ENCODE measurements at regions of chr2 and their contacts with region 1.

Region 1: DNA sequence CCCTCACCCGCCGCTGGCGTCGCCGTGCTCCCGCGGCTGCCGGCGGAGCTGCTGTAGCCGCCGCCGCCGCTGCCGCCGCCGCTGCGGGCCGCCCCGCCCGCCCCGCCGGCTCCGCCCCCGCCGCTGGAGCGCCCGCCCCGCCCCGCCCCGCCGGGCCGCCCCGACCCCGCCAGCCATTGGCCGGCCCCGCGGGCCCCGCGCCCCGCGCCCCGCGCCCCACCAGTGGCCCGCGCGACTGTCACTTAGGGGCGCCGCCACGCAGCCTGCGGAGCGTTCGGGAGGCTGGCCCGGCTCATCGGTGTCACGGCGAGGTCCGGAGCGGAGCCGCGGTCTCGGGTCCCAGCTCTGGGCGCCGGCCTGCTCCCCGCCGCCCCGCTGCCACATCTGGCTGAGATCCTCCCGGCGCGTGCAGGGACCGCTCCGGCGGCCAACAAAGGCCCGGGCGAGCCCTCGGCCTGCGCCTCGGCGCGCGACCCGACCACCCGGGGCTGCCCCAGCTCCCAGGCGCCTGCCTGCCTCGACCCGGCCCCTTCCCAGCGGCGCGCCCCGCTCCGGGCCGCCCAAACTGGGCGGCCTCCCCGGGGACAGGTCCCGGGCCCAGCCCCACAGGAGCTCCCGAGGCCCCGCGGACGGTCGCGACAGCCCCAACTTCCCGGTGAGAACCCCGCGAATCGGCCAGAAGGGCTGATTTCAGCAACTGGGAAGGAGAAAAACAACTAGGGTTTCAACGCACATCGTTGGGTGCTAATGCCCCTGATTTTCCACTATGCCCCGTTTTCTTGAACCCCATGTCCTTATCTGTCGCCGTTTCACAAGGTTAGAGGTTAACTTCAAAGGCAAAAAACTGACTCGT is at the start of gene MGAT4A:
- DNase-seq: peak; percentile 85
- ATAC-seq: peak; percentile 86
- H3K4me3 ChIP-seq: peak within 1 kb of the TSS; percentile 48 to 94 (median 63)
- H3K4me3 Mint-ChIP-seq: peak within 1 kb of the TSS; percentile 93
- H3K27ac ChIP-seq: peak within 1 kb of the TSS; percentile 44 to 75
- H3K27ac Mint-ChIP-seq: peak within 1 kb of the TSS; percentile 91
- H3K4me1 ChIP-seq: peaks cover 27 to 42% of the 10 kb centered on the region in 2 donors
- H3K4me1 Mint-ChIP-seq: peaks cover 53% of the 10 kb centered on the region
- H3K27me3 ChIP-seq: no peaks in the 10 kb centered on the region
- H3K27me3 Mint-ChIP-seq: no peaks in the 10 kb centered on the region
- CTCF ChIP-seq: no peak
- total RNA-seq, gene MGAT4A: 28.9 and 32.7 TPM in 2 replicates

Region 2: DNA sequence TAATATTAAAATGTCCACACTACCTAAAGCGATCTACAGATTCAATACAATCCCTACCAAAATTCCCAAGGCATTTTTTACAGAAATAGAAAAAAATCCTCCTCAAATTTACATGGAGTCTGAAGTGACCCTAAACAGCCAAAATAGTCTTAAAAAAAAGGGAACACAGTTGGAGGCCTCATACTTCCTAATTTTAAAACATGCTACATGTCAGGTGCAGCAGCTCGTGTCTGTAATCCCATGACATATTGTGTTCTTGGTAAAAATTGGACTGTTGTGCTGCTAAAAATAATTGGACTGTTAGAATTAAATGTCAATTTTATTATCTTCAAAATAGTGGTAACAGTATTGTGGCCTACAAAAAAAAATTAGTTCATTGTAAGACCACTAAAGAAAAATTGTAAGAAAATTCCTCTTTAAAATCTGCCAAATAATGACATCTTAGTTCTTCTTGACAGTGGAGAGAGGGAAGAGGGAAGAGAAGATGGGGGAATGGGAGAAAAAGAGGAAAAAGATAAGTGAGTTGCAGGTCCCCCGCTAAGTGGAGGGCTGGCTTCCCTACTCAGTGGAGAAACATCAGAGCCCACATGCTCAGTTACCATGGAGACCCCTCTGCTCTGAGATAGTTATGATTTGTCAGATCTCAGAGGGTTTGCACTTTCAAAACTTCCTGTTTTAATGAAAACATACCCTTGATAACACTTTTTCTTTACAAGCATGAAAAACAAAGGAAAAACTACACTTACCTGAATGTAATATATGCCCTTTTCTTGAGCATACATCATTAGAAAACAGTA is 76.4 kb before region 1 on chr2:
- CTCF ChIA-PET with region 1: interaction called, 12 read pairs
- POLR2A ChIA-PET with region 1: no interaction called
- intact Hi-C with region 1: loop called (anchors 2 kb)
- DNase-seq: peak; percentile 38
- ATAC-seq: peak; percentile 68
- H3K4me3 ChIP-seq: no peak overlapping the region
- H3K4me3 Mint-ChIP-seq: peak overlapping the region; percentile 6
- H3K27ac ChIP-seq: peak overlapping the region in 1 of 2 donors; percentile 37
- H3K27ac Mint-ChIP-seq: peak overlapping the region; percentile 71
- H3K4me1 ChIP-seq: peaks cover 5 to 8% of the 10 kb centered on the region in 2 donors
- H3K4me1 Mint-ChIP-seq: peaks cover 29% of the 10 kb centered on the region
- H3K27me3 ChIP-seq: no peaks in the 10 kb centered on the region
- H3K27me3 Mint-ChIP-seq: no peaks in the 10 kb centered on the region
- CTCF ChIP-seq: no peak

Region 3: DNA sequence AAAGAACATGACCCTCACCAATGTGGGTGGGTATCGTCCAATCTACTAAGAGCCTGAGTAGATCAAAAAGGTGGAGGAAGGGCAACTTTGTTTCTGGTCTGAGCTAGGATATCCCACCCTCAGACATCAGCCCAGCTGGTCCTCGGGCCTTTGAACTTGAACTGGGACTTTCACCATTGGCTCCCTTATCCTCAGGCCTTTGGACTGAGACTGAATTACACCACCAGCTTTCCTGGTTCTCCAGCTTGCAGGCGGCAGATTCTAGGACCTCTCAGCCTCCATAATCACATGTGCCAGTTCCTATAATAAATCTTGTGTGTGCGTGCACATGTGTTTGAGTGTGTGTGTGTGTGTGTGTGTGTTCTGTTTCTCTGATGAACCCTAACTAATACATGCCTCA is 11.0 kb before region 1 on chr2:
- CTCF ChIA-PET with region 1: interaction called, 15 read pairs
- POLR2A ChIA-PET with region 1: interaction called, 4 read pairs
- intact Hi-C with region 1: no loop called
- DNase-seq: no peak
- ATAC-seq: no peak
- H3K4me3 ChIP-seq: no peak overlapping the region
- H3K4me3 Mint-ChIP-seq: no peak overlapping the region
- H3K27ac ChIP-seq: no peak overlapping the region
- H3K27ac Mint-ChIP-seq: no peak overlapping the region
- H3K4me1 ChIP-seq: no peaks in the 10 kb centered on the region
- H3K4me1 Mint-ChIP-seq: peaks cover 28% of the 10 kb centered on the region
- H3K27me3 ChIP-seq: no peaks in the 10 kb centered on the region
- H3K27me3 Mint-ChIP-seq: no peaks in the 10 kb centered on the region
- CTCF ChIP-seq: no peak

Region 4: DNA sequence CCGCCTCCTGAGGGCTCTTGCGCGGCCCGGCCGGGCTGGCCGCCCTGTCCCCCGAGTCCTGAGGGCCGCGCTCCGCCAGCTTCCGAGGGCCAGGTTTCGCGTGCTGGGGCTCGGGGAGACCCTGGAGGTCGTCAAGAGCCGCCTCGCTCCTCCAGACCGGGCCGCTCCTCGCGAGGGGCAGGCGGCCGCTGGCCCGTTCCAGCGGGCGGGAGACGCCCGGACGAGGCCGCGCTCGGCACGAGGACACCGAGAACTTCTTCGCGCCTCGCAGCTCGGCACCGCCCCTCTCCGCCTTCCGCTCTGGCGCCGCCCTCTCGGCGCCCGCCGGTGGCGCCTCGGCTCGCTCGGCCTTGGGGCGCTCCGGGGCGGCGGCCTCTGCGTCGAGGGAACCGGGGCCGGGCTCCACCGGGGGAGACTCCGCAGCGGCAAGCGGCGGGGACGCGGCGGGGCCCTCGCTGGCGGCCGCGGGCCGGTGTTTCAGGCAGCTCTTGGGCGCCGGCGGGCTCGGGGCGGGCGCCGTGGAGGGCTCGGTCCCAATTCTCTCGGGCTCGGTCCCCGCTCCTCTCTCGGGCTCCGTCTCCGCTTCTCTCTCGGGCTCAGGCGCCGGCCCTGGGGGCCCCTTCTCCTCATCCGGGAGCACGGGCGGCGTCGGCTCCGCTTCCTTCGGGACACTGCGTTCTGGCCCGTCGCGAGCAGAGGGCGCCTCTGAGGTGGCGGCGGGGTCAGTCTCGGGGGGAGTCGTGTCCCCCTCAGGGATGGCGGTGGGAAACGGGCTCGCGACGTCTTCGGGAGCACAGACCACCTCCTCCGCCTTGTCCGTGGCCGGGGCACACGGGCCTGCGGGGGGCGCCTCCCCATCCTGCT is 91.3 kb after region 1 on chr2:
- CTCF ChIA-PET with region 1: no interaction called
- POLR2A ChIA-PET with region 1: interaction called, 4 read pairs
- intact Hi-C with region 1: loop called (anchors 5 kb)
- DNase-seq: peak; percentile 66
- ATAC-seq: peak; percentile 83
- H3K4me3 ChIP-seq: peak overlapping the region in 3 of 5 experiments; percentile 39 to 59 (median 54)
- H3K4me3 Mint-ChIP-seq: peak overlapping the region; percentile 50
- H3K27ac ChIP-seq: no peak overlapping the region
- H3K27ac Mint-ChIP-seq: no peak overlapping the region
- H3K4me1 ChIP-seq: peaks cover 4 to 16% of the 10 kb centered on the region in 2 donors
- H3K4me1 Mint-ChIP-seq: peaks cover 18% of the 10 kb centered on the region
- H3K27me3 ChIP-seq: peaks cover 0 to 20% (median 10%) of the 10 kb centered on the region in 4 experiments
- H3K27me3 Mint-ChIP-seq: peaks cover 5% of the 10 kb centered on the region
- CTCF ChIP-seq: peak; percentile 39

Region 5: DNA sequence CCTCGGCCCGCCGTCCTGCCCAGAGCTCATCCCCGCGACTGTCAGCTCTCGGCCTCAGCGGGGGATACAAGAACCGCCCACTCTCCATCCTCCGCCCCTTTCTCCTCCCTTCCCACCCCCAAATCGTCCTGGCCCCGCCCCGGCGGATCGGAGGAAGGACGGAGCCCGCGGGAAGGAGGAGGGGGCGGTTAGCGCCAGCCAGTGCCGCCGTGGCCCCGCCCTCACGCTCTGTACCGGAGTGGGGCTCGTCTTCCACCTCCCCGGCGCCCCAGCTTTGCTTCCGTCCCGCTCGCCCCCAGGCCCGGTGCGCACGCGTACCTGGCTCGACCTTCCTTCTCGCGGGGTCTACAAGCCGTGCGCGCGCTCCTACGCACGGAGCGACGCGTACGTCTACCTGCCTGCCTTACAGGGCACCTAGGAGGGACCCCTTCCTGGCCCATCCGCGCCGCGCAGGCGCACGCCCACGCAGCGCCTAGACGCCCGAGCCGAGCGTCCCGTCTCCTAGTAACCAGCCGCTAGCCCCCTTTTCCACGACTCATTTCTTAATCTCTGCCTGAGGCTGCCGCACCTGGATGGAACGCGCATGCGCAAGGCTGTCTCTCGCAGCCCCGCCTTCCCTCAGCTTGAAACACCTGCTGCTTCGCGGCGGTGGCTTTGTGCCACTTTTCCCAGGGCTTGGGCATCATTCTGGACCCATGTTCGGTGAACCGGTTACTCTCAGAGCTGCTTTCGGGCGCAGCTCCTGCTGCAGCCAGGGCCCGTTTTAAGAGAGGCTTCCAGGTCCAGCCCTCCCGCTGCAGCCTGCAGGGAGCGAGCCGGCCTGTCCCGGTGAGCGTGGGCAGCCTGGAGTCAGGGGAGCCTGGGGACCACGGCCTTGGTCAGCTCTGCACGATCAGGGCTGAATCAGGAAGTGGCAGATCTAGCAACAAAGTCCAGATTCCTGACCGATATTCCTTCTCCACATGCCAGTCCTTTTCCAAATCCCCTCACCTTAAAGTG is 410.1 kb after region 1 on chr2 and contains the start of gene C2orf15:
- CTCF ChIA-PET with region 1: no interaction called
- POLR2A ChIA-PET with region 1: no interaction called
- intact Hi-C with region 1: loop called (anchors 2 kb)
- DNase-seq: peak; percentile 98
- ATAC-seq: peak; percentile 90
- H3K4me3 ChIP-seq: peak within 1 kb of the TSS; percentile 76 to 90 (median 87)
- H3K4me3 Mint-ChIP-seq: peak within 1 kb of the TSS; percentile 97
- H3K27ac ChIP-seq: peak within 1 kb of the TSS; percentile 93
- H3K27ac Mint-ChIP-seq: peak within 1 kb of the TSS; percentile 97
- H3K4me1 ChIP-seq: peaks cover 12 to 13% of the 10 kb centered on the region in 2 donors
- H3K4me1 Mint-ChIP-seq: peaks cover 25% of the 10 kb centered on the region
- H3K27me3 ChIP-seq: no peaks in the 10 kb centered on the region
- H3K27me3 Mint-ChIP-seq: no peaks in the 10 kb centered on the region
- CTCF ChIP-seq: no peak
- total RNA-seq, gene C2orf15: 1.0 and 1.2 TPM in 2 replicates